Motor neuron (in vitro differentiated cells): ENCODE measurements at regions of chr14 and their contacts with region 1.

Region 1: DNA sequence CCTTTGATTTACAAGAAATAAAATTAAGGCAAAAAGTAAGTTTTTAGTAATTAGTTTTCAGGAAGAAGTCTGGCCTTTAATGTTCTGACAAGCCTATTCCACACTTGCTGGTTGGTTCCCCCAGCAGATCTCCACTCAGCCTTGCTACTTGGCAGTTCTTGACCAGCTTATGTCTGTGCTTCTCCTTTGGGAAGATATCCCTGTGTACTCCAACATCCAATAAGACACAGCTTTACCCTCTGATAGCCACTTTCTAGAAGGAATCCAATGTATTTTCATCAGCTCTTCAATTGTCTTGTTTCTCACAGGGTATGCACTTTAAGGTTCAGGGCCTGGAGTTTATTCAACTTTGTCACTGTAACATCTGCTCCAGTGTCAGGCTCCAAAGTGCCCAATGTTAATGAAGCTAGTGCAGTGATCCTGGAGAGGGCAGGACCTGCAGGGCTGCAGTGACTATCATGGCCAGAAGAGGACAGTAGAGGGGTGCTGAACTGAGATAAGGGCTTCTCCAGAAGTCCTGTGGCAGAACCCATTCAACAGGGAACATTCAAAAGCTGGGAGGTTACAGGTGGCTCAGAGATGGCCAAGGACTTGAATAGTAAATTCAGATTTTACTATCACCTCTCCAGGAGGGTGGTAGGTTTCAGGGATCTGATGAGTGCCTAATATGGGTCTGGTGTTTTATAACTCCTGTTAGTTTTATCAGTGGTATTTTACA is 22.9 kb downstream of the JKAMP start:
- ATAC-seq: peak; percentile 76 to 99 (median 86)
- H3K4me3 ChIP-seq: no peak overlapping the region
- H3K27ac ChIP-seq: no peak overlapping the region
- H3K4me1 ChIP-seq: no peaks in the 10 kb centered on the region

Region 2: GRCh38 chr14:59576332-59577294 is 69.4 kb after region 1 on chr14 and contains the start of gene CCDC175:
- in situ Hi-C with region 1: loop called in 1 of 9 experiments (anchors 10 kb)
- ATAC-seq: peak; percentile 66 to 99 (median 96)
- H3K4me3 ChIP-seq: peak within 1 kb of the TSS; percentile 7 to 35 (median 22)
- H3K27ac ChIP-seq: no peak within 1 kb of the TSS
- H3K4me1 ChIP-seq: no peaks in the 10 kb centered on the region
- total RNA-seq, gene CCDC175: 0.11 to 1.3 (median 0.14) TPM in 3 of 8 experiments, not detected in the others

Region 3: DNA sequence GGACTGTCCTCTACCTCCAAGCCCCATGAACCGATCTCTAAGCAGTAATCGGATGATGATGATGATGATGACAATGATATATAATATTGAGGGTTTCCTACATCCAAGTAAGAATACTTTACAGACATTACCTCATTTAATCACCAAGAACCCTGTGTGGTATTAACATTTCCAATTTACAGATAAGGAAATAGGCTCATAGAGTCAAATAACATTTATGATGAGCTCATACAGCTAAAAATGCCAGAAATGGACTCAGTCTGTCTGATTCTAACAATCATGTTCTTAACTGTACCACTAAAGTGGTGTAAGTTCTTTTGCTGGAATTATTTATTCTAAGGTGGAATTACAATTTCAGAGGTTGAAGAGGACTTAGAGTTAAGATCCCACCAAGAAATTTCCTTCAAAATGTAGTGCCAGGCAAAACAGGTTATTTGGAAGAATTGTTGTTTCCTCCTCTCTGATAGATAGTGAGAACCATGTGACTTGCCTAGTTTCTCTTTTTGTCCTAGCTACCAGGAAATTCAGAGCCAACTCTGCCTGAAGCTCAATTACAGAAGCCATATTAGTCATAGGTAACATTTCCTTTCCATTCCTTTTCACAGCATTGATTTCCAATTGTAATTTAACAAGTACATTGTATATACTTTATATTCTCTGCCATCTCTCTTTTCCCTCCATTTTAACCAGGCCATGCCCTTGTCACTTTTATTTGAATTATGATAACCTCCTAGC is 93.2 kb after region 1 on chr14:
- in situ Hi-C with region 1: no loop called
- ATAC-seq: no peak
- H3K4me3 ChIP-seq: no peak overlapping the region
- H3K27ac ChIP-seq: no peak overlapping the region
- H3K4me1 ChIP-seq: peaks cover 0 to 2% of the 10 kb centered on the region in 2 donors

Region 4: DNA sequence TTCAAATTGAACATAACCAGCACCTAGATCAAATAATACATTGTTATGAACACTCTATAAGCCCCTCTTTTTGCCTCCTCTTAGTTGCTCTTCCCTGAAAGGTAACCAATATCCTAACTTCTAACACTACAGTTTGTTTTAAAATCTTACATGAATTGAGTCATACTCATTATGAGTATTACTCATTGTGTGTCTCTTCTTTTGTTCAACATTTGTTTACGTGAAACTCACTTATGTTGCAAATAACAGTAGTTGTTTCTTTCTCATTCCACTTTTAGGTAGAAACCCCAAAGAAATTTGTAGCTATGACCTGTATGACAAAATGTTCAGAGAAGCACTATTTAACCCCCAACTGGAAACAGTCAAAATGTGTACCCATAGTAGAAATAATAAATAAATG is 419.3 kb after region 1 on chr14:
- in situ Hi-C with region 1: no loop called
- ATAC-seq: no peak
- H3K4me3 ChIP-seq: no peak overlapping the region
- H3K27ac ChIP-seq: no peak overlapping the region
- H3K4me1 ChIP-seq: no peaks in the 10 kb centered on the region